Gastrocnemius medialis (tissue), 4 donors: ENCODE measurements at regions of chr11 and their contacts with region 1.

Region 1: DNA sequence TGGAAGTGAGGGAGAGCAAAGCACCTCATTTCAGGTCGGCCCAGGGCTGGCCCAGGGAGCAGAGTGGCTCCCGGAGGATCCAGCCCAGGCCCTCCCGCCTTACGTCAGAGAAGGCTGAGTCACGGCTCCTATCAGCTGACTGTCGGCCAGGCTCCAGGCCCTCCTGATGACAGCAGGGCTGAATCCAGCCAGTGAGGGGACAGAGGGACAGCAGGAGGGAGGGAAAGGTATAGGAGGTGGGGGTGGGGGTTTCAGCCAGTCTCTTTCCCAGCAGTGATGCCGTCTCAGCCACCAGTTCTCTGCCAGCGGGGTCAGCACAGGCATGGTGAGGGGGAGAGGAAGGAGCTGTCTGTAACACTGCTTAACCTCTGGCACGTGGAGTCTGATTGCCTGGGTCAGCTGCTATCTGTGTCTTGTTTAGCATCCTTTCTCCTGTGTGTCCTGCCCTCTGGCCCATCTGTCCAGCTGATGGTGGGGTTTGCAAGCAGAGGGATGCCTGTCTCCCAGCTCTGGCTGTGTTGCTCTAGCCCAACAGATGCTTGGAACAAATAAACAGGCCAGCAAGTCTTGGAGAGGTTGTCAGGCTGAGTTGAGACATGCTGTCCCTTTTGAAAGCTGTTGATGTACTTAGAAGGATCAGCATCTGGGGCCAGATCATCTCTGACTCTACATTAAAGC is 74.0 kb downstream of the ADAMTS15 start:
- DNase-seq: peak; percentile 94 to 96
- ATAC-seq: peak; percentile 95 to 96
- H3K4me3 ChIP-seq: no peak overlapping the region
- H3K27ac ChIP-seq: peak overlapping the region; percentile 89 to 94 (median 92)
- H3K4me1 ChIP-seq: peaks cover 22 to 29% of the 10 kb centered on the region in 2 donors
- H3K27me3 ChIP-seq: no peaks in the 10 kb centered on the region
- CTCF ChIP-seq: no peak
- POLR2A ChIP-seq: peak; percentile 45 to 57

Region 2: DNA sequence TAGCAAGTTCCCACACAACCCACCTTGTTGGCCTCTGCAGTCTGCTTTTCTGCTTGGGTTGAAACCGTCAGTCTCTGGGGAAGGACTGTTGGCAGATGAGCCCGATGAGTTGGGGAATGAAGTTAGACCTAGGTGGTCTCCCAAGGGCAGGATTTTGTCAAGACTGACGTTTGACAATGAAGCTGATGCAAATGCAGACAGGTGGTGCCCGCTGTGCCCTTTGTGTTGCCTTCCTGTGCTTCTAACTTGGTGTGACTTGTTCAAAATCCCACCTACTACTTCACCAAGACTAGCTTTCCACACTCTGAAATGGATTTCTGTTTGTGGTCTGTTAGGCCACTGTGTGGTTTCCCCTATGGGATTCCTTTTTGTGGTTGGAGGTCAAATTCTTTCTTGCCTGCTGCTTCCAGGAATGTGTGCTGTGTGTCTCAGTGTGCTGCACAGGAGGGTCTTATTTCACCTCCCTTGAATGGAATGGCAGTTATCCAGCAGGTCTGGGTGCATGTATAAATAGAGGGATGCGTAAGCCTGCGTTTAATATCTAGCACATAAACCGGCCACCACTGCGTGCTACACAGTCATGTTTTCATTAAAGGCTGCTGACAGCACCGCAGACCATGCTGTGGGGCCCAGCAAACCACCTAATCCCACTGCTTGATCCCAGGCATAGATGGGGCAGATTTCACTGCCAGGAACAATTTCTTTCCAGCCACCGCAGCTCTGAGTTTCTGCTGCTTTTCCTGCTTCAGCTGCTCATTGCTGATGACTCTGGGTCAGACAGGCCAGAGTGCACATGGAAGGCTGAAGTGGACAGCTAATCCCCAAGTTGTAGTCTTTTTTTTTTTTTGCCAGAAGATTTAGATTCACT is 138.8 kb before region 1 on chr11:
- in situ Hi-C with region 1: no loop called
- intact Hi-C with region 1: no loop called
- DNase-seq: peak; percentile 55 to 81
- ATAC-seq: peak; percentile 95 to 98
- H3K4me3 ChIP-seq: no peak overlapping the region
- H3K27ac ChIP-seq: peak overlapping the region; percentile 74 to 83 (median 82)
- H3K4me1 ChIP-seq: peaks cover 12 to 29% of the 10 kb centered on the region in 2 donors
- H3K27me3 ChIP-seq: no peaks in the 10 kb centered on the region
- CTCF ChIP-seq: no peak
- POLR2A ChIP-seq: peak in 1 of 2 donors; percentile 31

Region 3: DNA sequence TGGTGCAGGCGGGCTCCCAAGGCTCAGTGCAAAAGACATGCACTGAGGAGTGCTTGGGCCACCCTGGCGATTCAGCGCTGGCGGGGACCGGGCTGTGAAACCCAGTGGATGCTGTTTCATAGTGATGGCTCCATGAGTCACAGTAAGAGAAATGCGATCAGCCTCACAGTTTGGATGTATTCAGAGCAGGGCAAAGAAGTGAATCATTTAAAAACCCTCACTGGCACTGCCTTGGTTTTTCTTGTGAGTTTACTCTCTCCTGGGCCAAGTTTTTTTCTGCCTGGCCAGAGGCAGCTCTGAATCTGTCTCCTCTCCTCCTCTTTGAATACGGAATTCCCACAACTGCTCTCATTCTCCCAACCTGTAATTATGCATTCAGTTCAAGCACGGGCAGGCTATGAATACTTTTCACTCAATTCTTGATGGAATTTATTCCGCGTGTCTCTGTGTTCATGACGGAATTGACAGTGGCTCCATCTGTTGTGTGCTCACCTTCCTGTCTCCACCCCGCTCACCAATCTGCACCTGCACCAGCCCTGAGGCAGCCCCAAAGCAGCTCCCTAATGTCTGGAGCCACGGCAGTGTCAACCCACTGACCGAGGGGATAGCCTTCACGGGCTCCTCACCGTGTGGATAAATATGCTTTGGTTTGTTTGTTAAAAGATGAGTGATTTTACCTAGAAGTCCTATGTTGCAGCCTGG is 108.9 kb before region 1 on chr11:
- in situ Hi-C with region 1: no loop called
- intact Hi-C with region 1: no loop called
- DNase-seq: no peak
- ATAC-seq: peak; percentile 62 to 64
- H3K4me3 ChIP-seq: no peak overlapping the region
- H3K27ac ChIP-seq: no peak overlapping the region
- H3K4me1 ChIP-seq: peaks cover 0 to 5% of the 10 kb centered on the region in 2 donors
- H3K27me3 ChIP-seq: peaks cover 0 to 16% (median 0%) of the 10 kb centered on the region in 3 donors
- CTCF ChIP-seq: no peak
- POLR2A ChIP-seq: no peak

Region 4: GRCh38 chr11:130448416-130449309 is 73.8 kb before region 1 on chr11 and contains the start of gene ADAMTS15:
- in situ Hi-C with region 1: no loop called
- intact Hi-C with region 1: loop called (anchors 2 kb)
- DNase-seq: peak; percentile 61 to 70
- ATAC-seq: peak; percentile 75 to 78
- H3K4me3 ChIP-seq: peak within 1 kb of the TSS; percentile 56 to 70 (median 66)
- H3K27ac ChIP-seq: peak within 1 kb of the TSS; percentile 65 to 77 (median 69)
- H3K4me1 ChIP-seq: peaks cover 5 to 19% of the 10 kb centered on the region in 2 donors
- H3K27me3 ChIP-seq: peaks cover 8 to 14% (median 8%) of the 10 kb centered on the region in 3 donors
- CTCF ChIP-seq: no peak
- POLR2A ChIP-seq: peak; percentile 29 to 56
- total RNA-seq, gene ADAMTS15: 1.2 to 3.4 (median 1.9) TPM

Region 5: GRCh38 chr11:130609121-130610035 is 87.0 kb after region 1 on chr11:
- in situ Hi-C with region 1: no loop called
- intact Hi-C with region 1: loop called (anchors 1 kb)
- DNase-seq: peak; percentile 83 to 88
- ATAC-seq: peak; percentile 86 to 88
- H3K4me3 ChIP-seq: no peak overlapping the region
- H3K27ac ChIP-seq: peak overlapping the region; percentile 73 to 77 (median 76)
- H3K4me1 ChIP-seq: peaks cover 18 to 30% of the 10 kb centered on the region in 2 donors
- H3K27me3 ChIP-seq: no peaks in the 10 kb centered on the region
- CTCF ChIP-seq: no peak
- POLR2A ChIP-seq: no peak

Region 6: DNA sequence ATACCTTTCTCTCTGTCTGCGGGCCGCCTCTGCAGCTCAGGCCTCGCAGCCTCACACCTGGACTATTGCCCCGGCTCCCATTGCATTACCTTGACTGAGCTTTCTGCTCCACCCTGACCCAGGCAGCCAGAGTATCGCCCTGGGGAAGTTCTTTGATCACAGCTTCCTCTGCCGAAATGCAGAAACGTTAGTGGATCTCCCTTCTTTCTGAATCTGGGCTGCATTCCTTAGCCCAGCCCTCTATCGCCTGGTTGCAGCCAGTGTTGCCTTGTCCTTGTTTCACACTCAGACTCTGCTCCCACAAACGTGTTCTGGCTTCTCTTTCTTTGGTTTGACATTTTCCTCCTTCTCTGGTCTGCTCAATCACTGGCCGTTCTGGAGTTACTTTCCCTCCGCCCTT is 121.8 kb after region 1 on chr11:
- in situ Hi-C with region 1: no loop called
- intact Hi-C with region 1: no loop called
- DNase-seq: no peak
- ATAC-seq: no peak
- H3K4me3 ChIP-seq: no peak overlapping the region
- H3K27ac ChIP-seq: peak overlapping the region in 1 of 4 donors; percentile 27
- H3K4me1 ChIP-seq: peaks cover 4 to 14% of the 10 kb centered on the region in 2 donors
- H3K27me3 ChIP-seq: no peaks in the 10 kb centered on the region
- CTCF ChIP-seq: no peak
- POLR2A ChIP-seq: no peak

Region 7: DNA sequence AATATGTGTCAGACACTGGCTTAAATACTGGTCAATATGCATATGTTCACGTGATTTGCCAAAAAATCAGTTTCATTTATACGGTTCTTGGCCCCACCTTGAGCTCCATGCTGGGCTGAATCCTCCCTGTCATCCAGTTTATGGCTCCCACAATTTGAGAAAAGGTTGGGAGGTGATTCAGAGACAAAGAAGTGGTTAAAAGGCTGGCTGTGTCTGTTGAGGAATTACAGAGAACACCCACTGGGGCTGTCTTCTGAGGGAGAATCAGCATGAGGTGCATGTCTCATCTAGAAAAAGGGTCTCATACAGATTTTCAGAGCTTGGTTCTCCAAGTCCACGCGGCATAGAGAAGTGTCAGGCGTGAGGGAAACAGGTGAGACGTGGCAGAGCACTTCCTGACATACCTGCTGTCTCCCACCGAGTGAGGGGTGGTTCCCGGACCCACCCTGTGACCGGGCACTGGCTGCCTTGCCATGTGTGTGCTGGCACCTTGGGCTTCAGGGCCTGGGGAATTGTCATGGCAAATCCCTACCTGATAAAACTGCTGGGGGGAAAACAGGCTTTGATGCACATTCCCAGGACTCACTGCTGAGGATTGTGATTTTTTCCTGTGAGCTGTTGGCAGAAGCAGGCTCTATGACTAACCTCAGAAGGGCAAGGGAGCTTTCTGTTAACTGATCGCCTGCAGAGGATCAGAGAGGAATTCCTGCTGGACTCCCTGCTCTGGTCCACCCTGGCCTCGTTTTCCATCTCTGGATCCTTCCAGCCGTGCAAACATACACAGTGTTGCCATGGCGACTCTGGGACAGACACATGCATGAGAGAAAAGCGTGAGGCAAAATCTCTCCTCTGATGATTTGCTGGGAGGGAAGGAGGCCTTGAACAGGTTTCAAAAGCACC is 149.6 kb after region 1 on chr11:
- in situ Hi-C with region 1: no loop called
- intact Hi-C with region 1: loop called (anchors 5 kb)
- DNase-seq: peak; percentile 16 to 41
- ATAC-seq: peak; percentile 13 to 45
- H3K4me3 ChIP-seq: no peak overlapping the region
- H3K27ac ChIP-seq: peak overlapping the region; percentile 12 to 56 (median 27)
- H3K4me1 ChIP-seq: peaks cover 50 to 51% of the 10 kb centered on the region in 2 donors
- H3K27me3 ChIP-seq: no peaks in the 10 kb centered on the region
- CTCF ChIP-seq: no peak
- POLR2A ChIP-seq: no peak

Region 8: GRCh38 chr11:130894322-130895025 is 372.1 kb after region 1 on chr11:
- in situ Hi-C with region 1: no loop called
- intact Hi-C with region 1: loop called (anchors 5 kb)
- DNase-seq: peak; percentile 34 to 62
- ATAC-seq: peak; percentile 62 to 68
- H3K4me3 ChIP-seq: no peak overlapping the region
- H3K27ac ChIP-seq: no peak overlapping the region
- H3K4me1 ChIP-seq: peaks cover 31 to 36% of the 10 kb centered on the region in 2 donors
- H3K27me3 ChIP-seq: no peaks in the 10 kb centered on the region
- CTCF ChIP-seq: peak; percentile 74 to 89 (median 83)
- POLR2A ChIP-seq: no peak